SK-N-SH (cell line): ENCODE measurements at regions of chr17 and their contacts with region 1.

Region 1: DNA sequence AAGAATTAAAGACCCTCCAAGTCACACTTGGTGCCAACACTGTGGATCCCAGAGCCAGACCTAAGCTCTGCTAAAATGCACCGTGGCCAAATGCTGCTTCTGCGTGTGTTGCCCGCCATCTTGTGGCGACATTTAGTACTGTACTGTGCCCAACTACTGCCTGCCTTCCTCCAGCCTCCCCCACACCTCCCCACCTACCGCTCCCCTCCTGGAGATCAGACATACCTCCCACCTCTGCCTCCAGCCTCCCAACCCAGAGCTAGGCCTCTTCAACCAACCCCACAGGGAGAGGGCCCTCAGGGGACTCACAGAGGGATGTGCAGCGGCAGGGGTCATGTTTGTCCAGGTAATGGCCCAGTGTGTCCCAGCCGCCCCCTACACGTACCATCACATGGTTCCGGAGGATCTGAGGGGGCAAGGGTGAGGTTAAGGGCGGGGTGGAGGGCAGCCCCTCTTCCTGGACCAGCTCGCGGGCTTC is 5.5 kb downstream of the GAS2L2 start:
- DNase-seq: peak; percentile 89
- H3K4me3 ChIP-seq: no peak overlapping the region; a peak in 1 of 4 replicates
- H3K27ac ChIP-seq: no peak overlapping the region
- H3K4me1 ChIP-seq: peaks cover 0 to 15% of the 10 kb centered on the region in 2 experiments; a peak in 1 of 4 replicates
- H3K27me3 ChIP-seq: peaks cover 11% of the 10 kb centered on the region
- CTCF ChIP-seq: peak; percentile 83
- EP300 ChIP-seq: no peak
- RAD21 ChIP-seq: peak; percentile 98

Region 2: GRCh38 chr17:35312790-35313711 is 434.5 kb before region 1 on chr17:
- CTCF ChIA-PET with region 1: interaction called, 23 read pairs
- POLR2A ChIA-PET with region 1: no interaction called
- DNase-seq: peak; percentile 52
- H3K4me3 ChIP-seq: no peak overlapping the region; a peak in 1 of 4 replicates
- H3K27ac ChIP-seq: no peak overlapping the region
- H3K4me1 ChIP-seq: peaks cover 0 to 3% of the 10 kb centered on the region in 2 experiments; a peak in 1 of 4 replicates
- H3K27me3 ChIP-seq: 0 out of 2 replicates have a peak, but pooled peaks cover 12% of the 10 kb centered on the region
- CTCF ChIP-seq: peak; percentile 82
- EP300 ChIP-seq: no peak
- RAD21 ChIP-seq: peak; percentile 82

Region 3: GRCh38 chr17:35578197-35578928 is 169.2 kb before region 1 on chr17 and contains the start of gene PEX12:
- CTCF ChIA-PET with region 1: interaction called, 10 read pairs
- POLR2A ChIA-PET with region 1: no interaction called
- DNase-seq: peak; percentile 87
- H3K4me3 ChIP-seq: peak within 1 kb of the TSS; percentile 89 to 94
- H3K27ac ChIP-seq: peak within 1 kb of the TSS; percentile 58 to 93
- H3K4me1 ChIP-seq: peaks cover 0 to 16% of the 10 kb centered on the region in 2 experiments; a peak in 3 of 4 replicates
- H3K27me3 ChIP-seq: no peaks in the 10 kb centered on the region
- CTCF ChIP-seq: 0 out of 2 replicates have a peak, but pooled peaks have one; percentile 12
- EP300 ChIP-seq: 0 out of 4 replicates have a peak, but pooled peaks of 1 of the 2 experiments have one; percentile 12
- RAD21 ChIP-seq: no peak
- polyA plus RNA-seq, gene PEX12: 4.3 and 5.4 TPM in 2 replicates

Region 4: DNA sequence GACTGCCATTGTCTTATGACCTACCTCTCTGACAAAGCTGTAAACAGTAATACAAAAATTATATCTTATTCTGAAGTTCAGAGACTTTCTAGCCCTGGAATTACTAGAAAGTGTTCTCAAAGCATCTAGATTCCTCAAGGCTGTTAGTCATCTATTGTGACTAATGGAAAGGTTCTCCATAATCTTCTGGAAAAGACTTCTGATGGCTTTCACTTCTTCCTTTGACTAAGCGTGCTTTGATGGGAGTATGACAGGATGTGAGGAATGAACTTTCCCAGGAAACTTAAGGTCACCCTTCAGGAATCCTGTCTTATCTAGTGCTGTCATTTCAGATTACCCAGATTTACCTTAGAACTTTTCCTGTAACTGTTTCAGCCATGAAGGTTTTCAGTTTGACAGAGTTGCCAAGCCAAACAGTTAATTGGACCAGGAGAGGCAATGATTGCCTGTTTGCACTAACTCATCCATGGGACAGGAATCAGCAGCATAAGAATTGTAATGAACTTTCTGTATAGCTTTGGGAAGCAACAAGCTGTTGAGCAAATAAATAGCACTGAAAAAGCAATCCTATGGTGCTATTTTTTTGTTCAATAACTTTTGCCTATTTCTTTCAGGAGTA is 116.9 kb before region 1 on chr17:
- CTCF ChIA-PET with region 1: interaction called, 10 read pairs
- POLR2A ChIA-PET with region 1: no interaction called
- DNase-seq: no peak
- H3K4me3 ChIP-seq: no peak overlapping the region
- H3K27ac ChIP-seq: peak overlapping the region in 1 of 2 experiments; percentile 60; a peak in 2 of 4 replicates
- H3K4me1 ChIP-seq: 0 out of 4 replicates have a peak, but pooled peaks cover 0 to 5% of the 10 kb centered on the region in 2 experiments
- H3K27me3 ChIP-seq: no peaks in the 10 kb centered on the region
- CTCF ChIP-seq: no peak
- EP300 ChIP-seq: no peak
- RAD21 ChIP-seq: no peak

Region 5: GRCh38 chr17:35666967-35667532 is 80.5 kb before region 1 on chr17:
- CTCF ChIA-PET with region 1: interaction called, 21 read pairs
- POLR2A ChIA-PET with region 1: no interaction called
- DNase-seq: no peak
- H3K4me3 ChIP-seq: no peak overlapping the region
- H3K27ac ChIP-seq: no peak overlapping the region
- H3K4me1 ChIP-seq: no peaks in the 10 kb centered on the region
- H3K27me3 ChIP-seq: no peaks in the 10 kb centered on the region
- CTCF ChIP-seq: no peak
- EP300 ChIP-seq: no peak
- RAD21 ChIP-seq: no peak

Region 6: GRCh38 chr17:35726127-35726952 is 21.2 kb before region 1 on chr17:
- CTCF ChIA-PET with region 1: interaction called, 53 read pairs
- POLR2A ChIA-PET with region 1: no interaction called
- DNase-seq: no peak
- H3K4me3 ChIP-seq: no peak overlapping the region
- H3K27ac ChIP-seq: peak overlapping the region; percentile 67 to 83
- H3K4me1 ChIP-seq: peaks cover 18 to 23% of the 10 kb centered on the region in 2 experiments; a peak in 3 of 4 replicates
- H3K27me3 ChIP-seq: no peaks in the 10 kb centered on the region
- CTCF ChIP-seq: no peak
- EP300 ChIP-seq: peak; percentile 8 to 11; a peak in 2 of 4 replicates
- RAD21 ChIP-seq: no peak

Region 7: GRCh38 chr17:35819456-35819855 is 71.9 kb after region 1 on chr17:
- CTCF ChIA-PET with region 1: interaction called, 10 read pairs
- POLR2A ChIA-PET with region 1: no interaction called
- DNase-seq: no peak
- H3K4me3 ChIP-seq: no peak overlapping the region
- H3K27ac ChIP-seq: no peak overlapping the region
- H3K4me1 ChIP-seq: peaks cover 2 to 6% of the 10 kb centered on the region in 2 experiments; a peak in 3 of 4 replicates
- H3K27me3 ChIP-seq: no peaks in the 10 kb centered on the region
- CTCF ChIP-seq: no peak
- EP300 ChIP-seq: no peak
- RAD21 ChIP-seq: no peak